ENCODE measurements at regions of chr7 and their contacts with region 1.

Region 1: DNA sequence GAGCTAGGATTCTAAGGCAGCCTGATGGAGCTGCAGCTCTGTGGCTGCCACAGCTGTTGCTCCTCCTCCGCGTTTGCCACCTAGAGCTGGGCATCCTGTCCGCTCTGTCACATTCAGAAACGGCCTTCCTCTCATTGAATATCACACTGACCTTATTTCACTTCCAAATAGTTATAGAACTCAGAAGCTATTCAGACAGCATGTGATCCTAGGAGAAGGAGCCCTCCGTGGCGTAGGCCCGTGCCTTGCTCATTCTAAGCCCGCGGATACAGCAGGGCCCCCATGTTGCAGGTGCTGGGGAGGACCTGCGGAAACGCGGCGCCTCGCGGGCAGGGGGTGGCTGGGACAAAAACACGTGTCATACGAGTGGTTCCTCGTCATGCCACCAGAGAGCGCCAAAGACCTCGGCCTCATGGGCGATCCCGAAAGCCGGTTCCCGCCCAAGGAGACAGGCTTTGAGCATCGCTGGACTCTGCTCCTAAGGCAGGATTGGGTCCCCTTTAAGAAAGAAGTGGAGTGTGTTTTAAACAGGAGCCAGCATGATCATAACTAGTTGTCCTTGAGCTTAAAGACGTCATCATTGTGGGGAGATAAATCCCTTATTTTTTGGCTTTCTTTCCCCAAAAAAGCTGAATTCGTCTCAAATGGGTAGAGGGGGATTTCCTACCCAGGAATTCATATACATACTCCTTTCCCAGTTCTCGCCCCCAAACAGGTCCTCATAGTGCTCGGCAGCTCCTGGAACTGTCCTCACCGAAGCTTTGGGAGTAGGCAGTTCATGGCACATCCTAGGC is 17.9 kb upstream of the FIGNL1 start:
- DNase-seq: peak; percentile 94
- H3K4me3 ChIP-seq: peak overlapping the region in 3 of 8 donors; percentile 13 to 56 (median 26)
- H3K27ac ChIP-seq: no peak overlapping the region
- H3K4me1 ChIP-seq: peaks cover 0 to 12% (median 10%) of the 10 kb centered on the region in 6 donors
- H3K27me3 ChIP-seq: no peaks in the 10 kb centered on the region
- CTCF ChIP-seq: peak; percentile 69 to 91 (median 84)
- POLR2A ChIP-seq: no peak

Region 2: GRCh38 chr7:49850917-49851613 is 616.9 kb before region 1 on chr7:
- intact Hi-C with region 1: no loop called
- DNase-seq: no peak
- H3K4me3 ChIP-seq: no peak overlapping the region
- H3K27ac ChIP-seq: no peak overlapping the region
- H3K4me1 ChIP-seq: no peaks in the 10 kb centered on the region
- H3K27me3 ChIP-seq: peaks cover 0 to 10% (median 0%) of the 10 kb centered on the region in 7 donors
- CTCF ChIP-seq: no peak
- POLR2A ChIP-seq: no peak

Region 3: GRCh38 chr7:50092579-50093491 is 375.2 kb before region 1 on chr7 and contains the start of gene ZPBP:
- intact Hi-C with region 1: no loop called
- DNase-seq: peak; percentile 88
- H3K4me3 ChIP-seq: peak within 1 kb of the TSS; percentile 33 to 72 (median 44)
- H3K27ac ChIP-seq: peak within 1 kb of the TSS in 5 of 8 donors; percentile 40 to 68 (median 48)
- H3K4me1 ChIP-seq: peaks cover 0 to 13% (median 9%) of the 10 kb centered on the region in 6 donors
- H3K27me3 ChIP-seq: no peaks in the 10 kb centered on the region
- CTCF ChIP-seq: peak; percentile 45 to 81 (median 72)
- POLR2A ChIP-seq: no peak
- total RNA-seq, gene ZPBP: not detected

Region 4: DNA sequence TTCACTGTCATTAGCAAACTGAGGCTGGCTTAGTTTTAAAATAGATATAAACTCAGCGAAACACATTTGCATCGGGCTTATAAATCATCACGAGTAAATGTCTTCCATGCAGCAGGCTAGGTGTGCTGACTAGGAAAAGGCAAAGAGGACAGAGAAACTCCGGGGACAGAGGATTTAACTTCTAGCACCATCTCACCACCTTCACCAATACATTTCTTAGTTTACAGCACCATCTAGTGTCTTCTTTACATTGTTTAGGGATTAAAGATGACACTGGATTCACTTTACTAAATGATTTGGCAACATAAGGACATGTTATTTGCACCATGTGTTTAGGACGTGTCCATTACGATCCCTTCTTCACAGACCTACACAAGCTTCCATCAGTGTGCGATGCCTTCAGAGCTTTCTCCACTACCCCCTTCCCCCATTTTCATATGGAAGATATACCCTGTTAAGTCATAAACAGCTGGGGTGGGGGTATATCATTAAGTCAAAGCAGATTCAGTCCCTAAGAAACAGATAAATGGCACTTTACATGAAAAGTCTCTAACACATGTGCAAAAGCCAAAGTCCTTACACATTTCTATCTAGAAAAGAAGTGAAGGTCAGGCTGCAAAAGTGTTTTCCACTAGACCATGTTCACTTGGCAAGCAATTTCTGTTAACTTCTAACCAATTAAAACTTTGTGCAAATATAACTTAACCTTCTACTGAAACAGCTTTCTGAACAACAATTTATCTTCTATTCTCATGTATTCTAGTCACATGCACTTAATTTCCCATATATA is 211.4 kb after region 1 on chr7:
- intact Hi-C with region 1: loop called (anchors 10 kb)
- DNase-seq: no peak
- H3K4me3 ChIP-seq: no peak overlapping the region
- H3K27ac ChIP-seq: no peak overlapping the region
- H3K4me1 ChIP-seq: peaks cover 0 to 48% (median 20%) of the 10 kb centered on the region in 6 donors
- H3K27me3 ChIP-seq: no peaks in the 10 kb centered on the region
- CTCF ChIP-seq: peak in 10 of 11 experiments; percentile 23 to 61 (median 47)
- POLR2A ChIP-seq: no peak

Region 5: GRCh38 chr7:51141451-51142003 is 673.5 kb after region 1 on chr7:
- intact Hi-C with region 1: loop called (anchors 5 kb)
- DNase-seq: no peak
- H3K4me3 ChIP-seq: no peak overlapping the region
- H3K27ac ChIP-seq: no peak overlapping the region
- H3K4me1 ChIP-seq: peaks cover 0 to 21% (median 6%) of the 10 kb centered on the region in 6 donors
- H3K27me3 ChIP-seq: no peaks in the 10 kb centered on the region
- CTCF ChIP-seq: peak in 5 of 11 experiments; percentile 7 to 64 (median 32)
- POLR2A ChIP-seq: no peak